BJ (cell line): ENCODE measurements at regions of chr11 and their contacts with region 1.

Region 1: GRCh38 chr11:119373921-119374631 is 7.4 kb downstream of the USP2 start:
- DNase-seq: no peak
- H3K4me3 ChIP-seq: no peak overlapping the region
- H3K27me3 ChIP-seq: no peaks in the 10 kb centered on the region; the same call in 1 of the 2 replicates
- CTCF ChIP-seq: peak; percentile 93

Region 2: GRCh38 chr11:119347242-119347641 is 26.8 kb before region 1 on chr11:
- CTCF ChIA-PET with region 1: interaction called, 110 read pairs
- POLR2A ChIA-PET with region 1: no interaction called
- DNase-seq: peak; percentile 61
- H3K4me3 ChIP-seq: no peak overlapping the region
- H3K27me3 ChIP-seq: peaks cover 20% of the 10 kb centered on the region
- CTCF ChIP-seq: no peak

Region 3: GRCh38 chr11:119363851-119364590 is 10.1 kb before region 1 on chr11:
- CTCF ChIA-PET with region 1: interaction called, 349 read pairs
- POLR2A ChIA-PET with region 1: no interaction called
- DNase-seq: no peak
- H3K4me3 ChIP-seq: peak overlapping the region; percentile 32
- H3K27me3 ChIP-seq: no peaks in the 10 kb centered on the region
- CTCF ChIP-seq: no peak

Region 4: DNA sequence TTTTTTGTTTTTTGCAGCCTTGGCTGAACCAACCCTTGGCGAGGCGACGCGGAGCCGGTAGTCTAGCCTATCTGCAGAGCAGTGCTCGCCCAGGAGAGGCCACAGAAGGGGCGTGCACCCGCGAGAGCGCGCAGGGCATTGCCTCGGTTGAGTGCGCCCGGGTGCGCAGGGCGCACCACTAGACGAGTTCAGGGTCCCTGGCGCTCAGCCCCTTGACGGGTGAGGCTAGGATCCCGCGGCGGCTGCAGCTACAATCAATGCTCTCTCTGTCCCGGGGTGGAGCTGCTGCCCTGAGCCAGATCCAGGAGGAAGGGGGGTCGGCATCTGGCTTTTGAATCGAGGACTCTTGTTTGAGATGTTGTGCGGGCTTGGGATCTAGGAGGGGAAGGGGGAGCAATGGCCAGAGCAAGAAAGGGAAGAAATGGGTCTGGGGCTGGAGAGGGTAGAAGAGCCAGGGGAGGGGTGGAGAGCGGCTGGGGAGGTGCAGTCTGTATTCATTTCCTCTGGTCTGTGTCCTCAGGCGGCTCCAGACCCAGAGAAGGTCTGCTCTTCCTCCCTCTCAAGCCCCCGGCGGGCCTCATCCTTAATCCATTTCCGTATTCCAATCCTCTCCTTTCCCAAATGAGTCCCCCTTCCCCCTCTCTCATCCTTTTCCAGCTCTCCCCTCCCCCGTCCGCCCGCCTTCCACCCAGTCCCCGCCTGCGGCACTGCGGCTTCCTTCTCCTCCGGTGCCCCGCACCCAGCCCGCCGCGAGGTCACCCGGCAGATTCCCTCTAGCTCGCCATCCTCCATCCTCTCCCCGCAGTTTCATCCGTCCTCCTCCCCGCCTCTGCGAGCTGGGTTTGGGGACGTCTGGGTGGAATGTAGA is 48.1 kb after region 1 on chr11:
- CTCF ChIA-PET with region 1: interaction called, 14 read pairs
- POLR2A ChIA-PET with region 1: no interaction called
- DNase-seq: no peak
- H3K4me3 ChIP-seq: peak overlapping the region; percentile 85
- H3K27me3 ChIP-seq: no peaks in the 10 kb centered on the region
- CTCF ChIP-seq: 0 out of 2 replicates have a peak, but pooled peaks have one; percentile 4